WTC11 (cell line): ENCODE measurements at regions of chr20 and their contacts with region 1.

Region 1: DNA sequence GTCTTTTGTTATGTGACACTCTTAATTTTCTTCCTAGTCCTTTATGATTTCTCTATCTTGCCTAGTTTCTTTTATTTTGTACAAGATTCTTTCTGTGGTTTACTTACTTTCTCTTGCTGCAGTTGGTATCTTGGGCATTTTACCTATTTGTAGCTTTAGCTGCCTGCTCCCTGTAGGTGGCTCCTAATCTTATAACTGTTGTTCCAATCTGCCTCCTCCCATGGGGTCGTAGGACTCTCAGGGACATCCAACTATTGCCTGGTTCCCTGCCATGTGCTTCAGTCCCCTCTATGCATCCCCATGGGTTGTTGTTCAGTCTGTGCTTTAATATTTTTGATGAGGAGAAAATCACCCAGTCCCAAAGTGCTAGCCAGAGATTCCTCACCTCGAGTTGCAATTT is 31.4 kb downstream of the RIN2 start:
- DNase-seq: no peak
- ATAC-seq: peak; percentile 75
- H3K4me3 Mint-ChIP-seq: no peak overlapping the region
- H3K27ac Mint-ChIP-seq: no peak overlapping the region
- H3K4me1 Mint-ChIP-seq: peaks cover 35% of the 10 kb centered on the region
- H3K27me3 Mint-ChIP-seq: no peaks in the 10 kb centered on the region
- CTCF ChIP-seq: 0 out of 2 replicates have a peak, but pooled peaks have one; percentile 1

Region 2: DNA sequence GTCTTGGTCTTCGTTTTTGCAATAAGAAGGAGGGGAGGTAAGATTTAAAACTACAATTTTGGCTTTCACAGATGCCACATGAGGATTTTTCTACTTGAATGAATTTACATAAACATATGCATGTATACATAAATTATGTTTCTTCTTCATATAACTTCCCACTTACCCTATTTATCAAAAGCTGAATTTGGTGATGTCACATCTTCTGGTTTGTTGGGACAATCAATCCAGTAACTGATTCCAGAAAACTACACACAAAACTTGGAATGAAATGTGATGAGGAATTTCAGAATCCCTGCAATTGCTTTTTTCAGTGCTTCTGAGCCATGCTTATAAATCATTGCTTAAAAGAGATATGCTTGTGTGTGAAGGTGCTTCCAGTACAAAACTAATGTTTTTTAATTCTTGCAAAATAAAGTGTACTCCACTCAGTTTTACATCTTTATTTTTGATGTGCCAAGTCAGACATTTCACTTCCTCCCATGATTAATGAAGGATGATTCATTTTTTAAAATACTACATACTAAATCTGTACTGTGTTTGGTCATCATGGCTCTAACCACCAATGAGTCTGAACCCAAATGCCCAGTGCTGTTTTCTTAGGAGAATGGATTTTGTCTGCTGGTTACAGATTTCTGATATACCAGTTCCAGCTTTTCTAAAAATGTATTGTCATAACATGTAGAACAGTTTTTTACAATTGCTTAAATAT is 63.5 kb before region 1 on chr20:
- CTCF ChIA-PET with region 1: no interaction called
- POLR2A ChIA-PET with region 1: no interaction called
- DNase-seq: no peak
- ATAC-seq: no peak
- H3K4me3 Mint-ChIP-seq: no peak overlapping the region
- H3K27ac Mint-ChIP-seq: no peak overlapping the region
- H3K4me1 Mint-ChIP-seq: no peaks in the 10 kb centered on the region
- H3K27me3 Mint-ChIP-seq: no peaks in the 10 kb centered on the region
- CTCF ChIP-seq: no peak

Region 3: DNA sequence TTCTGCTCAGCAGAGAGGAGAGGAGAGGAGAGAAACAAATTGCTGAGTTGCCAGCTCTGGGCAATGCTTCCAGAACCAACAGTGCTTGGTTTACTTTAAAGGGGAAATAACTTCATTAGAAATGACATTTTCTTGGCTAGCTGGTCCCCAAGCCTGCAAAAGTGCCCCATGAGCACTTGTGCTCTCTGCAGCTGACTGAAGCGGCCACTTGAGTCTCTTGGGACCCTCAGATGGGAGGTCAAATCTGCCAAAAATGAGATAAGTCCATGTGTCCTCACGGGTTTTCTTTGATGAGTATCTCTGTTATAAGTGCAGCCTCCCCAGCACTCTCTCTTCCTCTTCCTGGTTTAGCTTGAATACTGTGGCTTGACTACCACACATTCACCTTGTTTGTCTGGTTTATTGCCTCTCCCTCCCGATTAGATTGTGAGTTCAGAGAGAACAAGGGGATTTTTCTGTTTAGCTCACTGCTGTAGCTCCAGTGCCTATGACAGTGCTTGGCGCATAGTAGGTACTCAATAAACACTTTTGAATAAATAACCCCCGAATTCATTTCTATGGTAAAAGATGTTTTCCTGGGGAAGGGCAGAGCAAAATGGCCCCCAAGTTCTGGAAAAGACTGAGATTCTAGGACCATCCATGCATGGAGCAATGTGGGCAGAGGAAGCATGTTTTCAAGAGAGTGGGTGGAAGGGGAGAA is 38.4 kb before region 1 on chr20:
- CTCF ChIA-PET with region 1: no interaction called
- POLR2A ChIA-PET with region 1: no interaction called
- DNase-seq: no peak
- ATAC-seq: no peak
- H3K4me3 Mint-ChIP-seq: no peak overlapping the region
- H3K27ac Mint-ChIP-seq: no peak overlapping the region
- H3K4me1 Mint-ChIP-seq: peaks cover 5% of the 10 kb centered on the region
- H3K27me3 Mint-ChIP-seq: peaks cover 42% of the 10 kb centered on the region
- CTCF ChIP-seq: no peak

Region 4: DNA sequence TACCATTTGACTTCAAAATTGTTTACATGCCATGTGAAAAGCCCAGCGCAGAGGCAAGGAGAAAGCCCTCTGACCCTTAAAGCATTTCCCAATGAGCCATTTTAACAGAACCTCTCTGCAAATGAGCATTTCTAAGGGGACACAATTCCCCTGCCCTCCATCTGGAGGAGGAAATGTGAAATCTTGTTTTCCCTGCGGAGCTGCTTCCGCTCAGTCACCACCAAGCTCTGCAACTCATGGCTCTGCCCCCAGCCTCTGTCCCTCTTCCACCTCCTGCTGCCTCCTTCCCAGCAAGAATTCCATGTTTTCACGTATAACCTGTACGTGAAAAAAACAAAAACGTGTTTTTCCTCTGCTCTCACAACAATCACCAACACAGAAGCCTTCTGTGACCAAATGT is 19.1 kb before region 1 on chr20:
- CTCF ChIA-PET with region 1: interaction called, 19 read pairs
- POLR2A ChIA-PET with region 1: no interaction called
- DNase-seq: no peak
- ATAC-seq: peak; percentile 69
- H3K4me3 Mint-ChIP-seq: no peak overlapping the region
- H3K27ac Mint-ChIP-seq: 0 out of 2 replicates have a peak overlapping the region, but pooled peaks have one; percentile 53
- H3K4me1 Mint-ChIP-seq: peaks cover 34% of the 10 kb centered on the region
- H3K27me3 Mint-ChIP-seq: no peaks in the 10 kb centered on the region
- CTCF ChIP-seq: no peak

Region 5: DNA sequence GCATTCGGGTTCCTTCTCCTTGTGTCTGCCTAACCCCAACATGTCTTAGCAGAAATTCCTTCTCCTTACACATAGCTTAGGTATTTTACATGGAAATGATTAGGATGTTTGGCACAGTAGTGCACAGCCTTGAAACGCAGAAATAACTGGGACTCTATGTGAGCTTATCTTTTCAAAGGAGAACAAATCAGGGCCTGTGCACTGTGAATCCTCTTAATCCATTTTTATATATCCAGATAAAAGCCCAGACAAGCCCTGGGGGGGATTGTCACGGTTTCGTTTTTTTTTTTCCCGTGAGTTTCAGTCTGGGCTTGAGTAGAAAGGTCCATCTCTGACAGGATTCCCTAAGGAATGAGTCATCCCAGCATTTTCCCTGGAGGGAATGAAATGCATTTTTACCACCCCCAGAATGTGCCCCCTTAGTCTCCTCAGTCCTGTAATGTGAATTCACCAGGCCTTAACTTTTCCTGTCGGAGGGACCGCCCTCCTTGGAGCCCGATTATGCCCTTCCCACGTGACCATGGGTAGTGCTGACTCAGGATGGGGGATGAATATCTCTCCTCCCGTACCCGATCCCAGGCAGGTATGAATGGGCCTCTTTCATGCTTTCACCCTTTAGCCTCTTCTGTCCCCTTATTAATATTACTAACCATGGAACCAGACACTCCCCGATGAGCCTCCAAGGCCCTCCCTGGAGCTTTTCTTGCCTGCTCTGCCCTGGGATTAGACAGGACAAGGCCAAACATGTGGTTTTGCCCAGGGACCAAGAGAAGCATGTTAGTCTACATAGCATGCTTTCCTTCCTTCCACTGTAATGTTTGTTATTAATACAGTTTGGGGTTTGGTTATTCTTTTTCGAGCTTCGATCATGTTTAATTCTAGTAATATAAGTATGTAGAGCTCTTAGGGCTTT is 203.8 kb after region 1 on chr20:
- CTCF ChIA-PET with region 1: interaction called, 10 read pairs
- POLR2A ChIA-PET with region 1: no interaction called
- DNase-seq: peak; percentile 30
- ATAC-seq: peak; percentile 82
- H3K4me3 Mint-ChIP-seq: no peak overlapping the region
- H3K27ac Mint-ChIP-seq: peak overlapping the region; percentile 63
- H3K4me1 Mint-ChIP-seq: peaks cover 33% of the 10 kb centered on the region
- H3K27me3 Mint-ChIP-seq: no peaks in the 10 kb centered on the region
- CTCF ChIP-seq: no peak